ENCODE measurements at regions of chr1 and their contacts with region 1.

Region 1: DNA sequence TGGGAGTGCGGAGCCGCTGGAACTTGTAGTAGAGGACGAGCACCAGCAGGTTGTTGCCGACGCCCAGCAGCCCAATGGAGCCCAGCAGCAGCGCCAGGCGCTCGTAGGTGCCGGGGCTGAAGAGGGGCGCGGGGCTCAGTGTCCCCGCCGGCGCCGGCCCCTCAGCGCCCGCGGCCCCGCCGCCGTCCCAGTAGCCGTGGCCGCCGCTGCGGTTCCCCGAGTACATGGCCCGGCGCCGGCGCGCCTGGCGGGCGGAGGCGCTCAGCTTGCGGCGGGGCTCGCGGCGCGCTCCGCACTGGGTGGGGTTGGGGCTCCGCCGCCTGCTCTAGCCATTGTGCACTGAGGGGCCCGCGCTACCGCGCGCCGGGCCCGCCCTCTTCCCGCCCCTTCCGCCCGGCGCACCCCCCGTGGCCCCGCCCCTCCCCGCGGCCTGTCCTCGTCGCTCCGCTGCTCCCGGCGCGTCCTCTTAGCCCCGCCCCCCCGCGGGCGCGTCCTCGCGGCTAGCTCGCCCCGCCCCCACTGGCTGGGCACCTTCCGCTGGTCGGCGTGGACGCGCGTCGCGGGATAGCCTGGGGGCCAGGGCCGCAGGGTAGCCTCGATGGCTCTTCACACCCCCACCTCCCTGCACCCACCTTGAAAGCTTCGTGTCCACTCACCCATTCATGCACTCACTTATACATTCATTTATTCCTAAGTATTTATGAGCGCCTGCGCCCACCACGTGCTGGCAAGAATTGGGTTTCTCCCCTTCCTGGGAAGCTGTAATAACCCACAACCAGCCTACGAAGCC is at the starts of genes CHML and OPN3:
- DNase-seq: peak; percentile 92

Region 2: GRCh38 chr1:241286486-241286885 is 353.7 kb before region 1 on chr1:
- in situ Hi-C with region 1: no loop called
- DNase-seq: no peak

Region 3: DNA sequence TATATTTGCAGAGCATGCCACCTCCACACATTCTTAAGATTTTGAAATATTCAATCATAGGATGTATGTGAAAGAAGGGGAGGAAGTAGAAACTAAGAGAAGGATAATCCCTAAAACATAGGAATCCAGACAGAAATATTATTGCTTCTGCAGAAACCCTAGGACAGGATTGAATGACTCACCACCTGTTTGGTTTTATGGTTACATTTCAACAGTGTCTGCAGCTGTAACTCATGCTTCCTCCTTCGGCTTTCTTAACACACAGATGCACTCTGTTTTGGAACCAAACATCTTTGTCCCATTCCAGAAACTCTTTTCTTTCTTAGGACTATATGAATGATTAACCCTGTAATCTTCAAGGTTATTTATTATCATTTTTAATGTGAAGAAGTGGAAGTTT is 303.9 kb before region 1 on chr1:
- in situ Hi-C with region 1: no loop called
- DNase-seq: no peak

Region 4: GRCh38 chr1:241857131-241857530 is 216.9 kb after region 1 on chr1:
- in situ Hi-C with region 1: loop called (anchors 25 kb)
- DNase-seq: no peak